Heart left ventricle (tissue), 16 donors: ENCODE measurements at regions of chr3 and their contacts with region 1.

Region 1: DNA sequence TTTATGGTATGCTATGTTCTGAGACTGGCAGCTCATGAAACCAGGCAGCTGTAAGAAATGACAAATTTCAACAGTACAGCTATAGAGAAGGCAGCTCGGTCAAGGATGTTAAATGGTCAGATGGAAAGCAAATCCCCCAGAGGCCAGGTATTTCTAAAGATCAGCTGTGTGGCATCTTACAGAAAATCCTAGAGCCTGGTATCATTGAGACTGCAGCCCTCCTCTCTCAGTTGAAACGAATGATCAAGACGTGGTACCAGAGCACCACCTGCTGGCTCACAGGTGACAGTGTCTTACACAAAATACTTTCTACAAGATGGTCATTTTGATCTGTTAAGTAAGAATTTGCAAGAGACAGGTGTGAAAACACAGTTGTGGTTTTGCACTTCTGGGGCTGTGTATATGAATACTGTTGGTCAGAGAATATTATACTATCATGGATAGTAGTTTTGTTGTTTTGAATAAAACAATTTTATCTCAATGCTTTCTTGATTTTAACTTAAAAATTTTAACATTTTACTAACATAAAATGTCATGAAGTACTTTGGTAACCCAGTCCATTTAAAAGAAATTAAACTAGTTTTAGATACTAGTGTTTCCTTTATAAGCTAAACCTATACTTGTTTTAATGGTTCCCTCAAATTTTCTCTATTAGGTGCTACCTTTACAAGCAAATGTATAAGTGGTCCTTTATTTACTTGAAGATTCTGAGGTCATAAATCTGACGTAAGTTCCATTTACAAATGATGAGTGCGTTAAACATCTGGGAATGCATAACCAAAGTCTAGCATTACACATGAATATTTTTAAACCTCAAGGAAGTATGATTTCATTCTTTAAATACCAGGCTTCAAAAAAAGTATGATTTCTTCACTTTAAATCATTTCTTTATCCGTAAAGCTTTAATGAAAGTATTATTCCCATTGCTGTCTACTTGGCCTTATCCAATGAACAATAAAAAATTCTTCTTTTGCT is 121.8 kb downstream of the PDZRN3 start:
- DNase-seq: peak in 4 of 5 donors; percentile 52 to 63 (median 61)
- ATAC-seq: peak; percentile 34 to 65 (median 53)
- H3K4me3 ChIP-seq: no peak overlapping the region
- H3K27ac ChIP-seq: peak overlapping the region in 11 of 12 donors; percentile 4 to 64 (median 35)
- H3K4me1 ChIP-seq: peaks cover 0 to 58% (median 21%) of the 10 kb centered on the region in 12 donors
- H3K27me3 ChIP-seq: no peaks in the 10 kb centered on the region
- CTCF ChIP-seq: peak; percentile 59 to 86 (median 76)
- POLR2A ChIP-seq: no peak

Region 2: GRCh38 chr3:73100741-73101559 is 401.9 kb before region 1 on chr3:
- intact Hi-C with region 1: loop called (anchors 1 to 5 kb)
- DNase-seq: peak in 4 of 5 donors; percentile 70 to 80 (median 76)
- ATAC-seq: peak; percentile 65 to 87 (median 79)
- H3K4me3 ChIP-seq: no peak overlapping the region
- H3K27ac ChIP-seq: no peak overlapping the region
- H3K4me1 ChIP-seq: peaks cover 0 to 8% (median 1%) of the 10 kb centered on the region in 12 donors
- H3K27me3 ChIP-seq: no peaks in the 10 kb centered on the region
- CTCF ChIP-seq: peak; percentile 84 to 96 (median 91)
- POLR2A ChIP-seq: no peak

Region 3: DNA sequence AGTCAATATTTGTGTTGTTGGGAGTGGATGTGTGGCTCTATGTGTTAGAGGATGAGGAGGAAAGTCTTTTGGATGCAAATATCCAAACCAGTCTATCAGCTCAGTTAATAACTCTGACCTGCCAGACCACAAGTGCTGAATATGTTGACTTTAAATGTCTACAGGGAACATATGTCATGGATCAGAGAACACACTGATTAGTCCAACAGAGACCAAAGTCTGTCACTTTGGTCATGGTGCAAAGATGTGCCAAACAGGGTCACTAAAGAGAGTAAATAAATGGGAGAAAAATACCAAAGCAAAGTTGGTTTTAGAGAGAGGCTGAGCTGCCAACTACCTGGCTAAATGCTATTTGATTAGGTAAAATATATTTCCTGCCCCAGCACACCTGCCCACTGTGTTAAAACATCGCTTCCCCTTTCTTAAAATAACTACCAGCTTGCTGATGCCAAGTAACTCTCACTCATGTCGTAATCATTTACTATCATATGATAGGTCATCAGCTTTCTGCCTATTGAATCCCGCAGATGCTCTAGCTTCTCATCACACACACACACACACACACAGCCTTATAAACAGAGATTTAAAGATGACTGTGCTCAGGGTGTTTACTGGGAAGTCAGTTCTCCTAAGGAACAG is 51.5 kb before region 1 on chr3:
- intact Hi-C with region 1: loop called in 8 of 10 experiments (anchors 2 to 10 kb)
- DNase-seq: no peak
- ATAC-seq: peak in 2 of 4 donors; percentile 26
- H3K4me3 ChIP-seq: no peak overlapping the region
- H3K27ac ChIP-seq: peak overlapping the region in 1 of 12 donors; percentile 42
- H3K4me1 ChIP-seq: peaks cover 0 to 62% (median 15%) of the 10 kb centered on the region in 12 donors
- H3K27me3 ChIP-seq: no peaks in the 10 kb centered on the region
- CTCF ChIP-seq: no peak
- POLR2A ChIP-seq: no peak

Region 4: GRCh38 chr3:73459711-73460110 is 43.2 kb before region 1 on chr3:
- intact Hi-C with region 1: loop called in 8 of 10 experiments (anchors 2 to 10 kb)
- DNase-seq: no peak
- ATAC-seq: no peak
- H3K4me3 ChIP-seq: no peak overlapping the region
- H3K27ac ChIP-seq: no peak overlapping the region
- H3K4me1 ChIP-seq: peaks cover 0 to 36% (median 10%) of the 10 kb centered on the region in 12 donors
- H3K27me3 ChIP-seq: no peaks in the 10 kb centered on the region
- CTCF ChIP-seq: no peak
- POLR2A ChIP-seq: no peak

Region 5: GRCh38 chr3:73520865-73521461 is 18.1 kb after region 1 on chr3:
- intact Hi-C with region 1: no loop called
- DNase-seq: peak in 2 of 5 donors; percentile 29 to 50
- ATAC-seq: peak; percentile 44 to 71 (median 58)
- H3K4me3 ChIP-seq: peak overlapping the region in 2 of 12 donors; percentile 8 to 10
- H3K27ac ChIP-seq: peak overlapping the region in 11 of 12 donors; percentile 22 to 85 (median 42)
- H3K4me1 ChIP-seq: peaks cover 0 to 64% (median 24%) of the 10 kb centered on the region in 12 donors
- H3K27me3 ChIP-seq: no peaks in the 10 kb centered on the region
- CTCF ChIP-seq: peak in 1 of 12 donors; percentile 0
- POLR2A ChIP-seq: no peak

Region 6: GRCh38 chr3:73766599-73767381 is 263.9 kb after region 1 on chr3:
- intact Hi-C with region 1: loop called in 3 of 10 experiments (anchors 10 kb)
- DNase-seq: peak in 1 of 5 donors; percentile 27
- ATAC-seq: peak; percentile 42 to 69 (median 63)
- H3K4me3 ChIP-seq: peak overlapping the region in 7 of 12 donors; percentile 8 to 37 (median 24)
- H3K27ac ChIP-seq: peak overlapping the region in 11 of 12 donors; percentile 33 to 75 (median 59)
- H3K4me1 ChIP-seq: peaks cover 0 to 33% (median 8%) of the 10 kb centered on the region in 12 donors
- H3K27me3 ChIP-seq: no peaks in the 10 kb centered on the region
- CTCF ChIP-seq: no peak
- POLR2A ChIP-seq: no peak

Region 7: GRCh38 chr3:73773233-73773632 is 270.3 kb after region 1 on chr3:
- intact Hi-C with region 1: loop called in 3 of 10 experiments (anchors 10 kb)
- DNase-seq: peak in 3 of 5 donors; percentile 33 to 42 (median 38)
- ATAC-seq: peak in 3 of 4 donors; percentile 60 to 75 (median 67)
- H3K4me3 ChIP-seq: no peak overlapping the region
- H3K27ac ChIP-seq: peak overlapping the region in 2 of 12 donors; percentile 9 to 33
- H3K4me1 ChIP-seq: peaks cover 0 to 36% (median 4%) of the 10 kb centered on the region in 12 donors
- H3K27me3 ChIP-seq: no peaks in the 10 kb centered on the region
- CTCF ChIP-seq: no peak
- POLR2A ChIP-seq: no peak

Region 8: DNA sequence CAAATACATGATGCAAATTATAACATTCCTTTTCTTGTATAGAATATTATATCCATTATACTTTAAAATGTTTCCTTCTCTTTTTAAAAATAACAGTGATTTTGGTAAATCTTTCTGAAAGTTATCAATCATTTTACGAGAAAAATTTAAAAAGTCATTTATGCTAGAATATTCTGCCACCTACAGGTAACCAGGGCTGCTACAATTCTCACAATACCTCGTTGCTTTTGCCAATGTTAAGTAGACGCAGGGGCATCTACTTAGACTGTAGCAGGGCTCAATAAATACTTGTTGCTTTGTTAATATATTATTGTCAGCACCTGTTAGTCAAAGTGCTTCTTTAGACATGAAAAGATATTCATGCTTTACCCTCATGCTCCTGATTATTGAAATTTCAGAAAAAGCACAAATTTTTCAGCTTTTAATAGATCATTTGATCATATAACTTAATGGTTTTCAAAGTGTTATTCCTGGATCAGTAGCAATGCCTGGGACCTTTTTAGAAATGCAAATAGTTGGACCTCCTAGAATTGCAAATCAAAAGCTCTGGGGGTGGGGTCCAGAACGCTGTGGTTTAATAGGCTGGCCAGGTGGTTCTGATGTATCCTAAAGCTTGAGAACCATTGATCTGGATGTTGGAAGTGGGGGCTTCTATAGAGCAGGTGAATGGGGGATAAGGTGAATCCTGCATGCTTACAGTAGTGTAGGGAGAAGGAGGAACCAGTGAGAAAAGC is 345.4 kb after region 1 on chr3:
- intact Hi-C with region 1: loop called in 7 of 10 experiments (anchors 2 to 10 kb)
- DNase-seq: no peak
- ATAC-seq: peak in 1 of 4 donors; percentile 58
- H3K4me3 ChIP-seq: no peak overlapping the region
- H3K27ac ChIP-seq: no peak overlapping the region
- H3K4me1 ChIP-seq: peaks cover 0 to 9% (median 0%) of the 10 kb centered on the region in 12 donors
- H3K27me3 ChIP-seq: no peaks in the 10 kb centered on the region
- CTCF ChIP-seq: peak; percentile 47 to 78 (median 66)
- POLR2A ChIP-seq: no peak